ENCODE measurements at regions of chr11 and their contacts with region 1.

Region 1: GRCh38 chr11:14350215-14350614 is 8.8 kb downstream of the RRAS2 start:
- DNase-seq: no peak
- H3K4me3 ChIP-seq: no peak overlapping the region
- H3K27ac ChIP-seq: no peak overlapping the region
- H3K4me1 ChIP-seq: no peaks in the 10 kb centered on the region
- H3K27me3 ChIP-seq: no peaks in the 10 kb centered on the region
- CTCF ChIP-seq: no peak
- POLR2A ChIP-seq: no peak

Region 2: GRCh38 chr11:14312736-14313438 is 37.3 kb before region 1 on chr11:
- intact Hi-C with region 1: loop called (anchors 5 kb)
- DNase-seq: no peak
- H3K4me3 ChIP-seq: no peak overlapping the region
- H3K27ac ChIP-seq: no peak overlapping the region
- H3K4me1 ChIP-seq: no peaks in the 10 kb centered on the region
- H3K27me3 ChIP-seq: no peaks in the 10 kb centered on the region
- CTCF ChIP-seq: no peak
- POLR2A ChIP-seq: no peak

Measured in prostate gland (tissue), 2 donors.